HepG2 (cell line): ENCODE measurements at regions of chr3 and their contacts with region 1.

Region 1: DNA sequence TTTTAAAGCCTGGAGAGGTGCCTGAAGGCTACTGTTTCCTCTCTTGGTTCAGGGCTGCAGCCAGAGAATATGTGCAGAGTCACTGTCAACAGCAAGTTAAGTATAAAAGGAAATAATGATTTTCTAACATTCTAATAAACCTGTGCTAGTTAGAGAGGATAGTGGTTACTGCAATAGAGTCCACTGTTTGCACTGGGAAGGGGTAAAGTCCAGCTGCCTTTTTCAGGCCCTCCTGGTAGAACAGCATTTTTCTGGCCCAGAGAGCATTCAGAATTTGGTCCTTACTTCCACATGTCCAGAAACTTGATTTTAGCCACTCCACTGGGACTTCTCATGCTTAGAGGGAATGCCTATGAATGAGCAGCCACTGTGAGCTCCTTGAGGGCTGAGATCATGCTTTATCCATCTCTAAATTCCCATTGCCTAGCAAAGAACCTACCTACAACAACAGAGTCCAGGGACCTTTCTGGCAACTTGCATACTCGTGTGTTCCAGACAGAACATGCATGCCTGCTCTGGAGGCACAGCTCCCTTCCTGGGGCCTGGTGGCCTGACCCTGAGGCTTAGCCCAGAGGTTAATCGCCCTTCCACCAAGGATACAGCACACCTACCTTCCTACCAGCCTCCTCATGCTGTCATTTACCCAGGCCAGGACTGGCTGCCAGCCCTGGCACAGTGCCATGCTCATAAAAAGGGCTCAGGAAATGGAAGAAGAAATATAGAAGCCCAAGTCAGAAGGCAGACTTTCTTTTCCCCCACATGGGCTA is 50.3 kb upstream of the ATP13A3 start:
- DNase-seq: peak; percentile 70
- ATAC-seq: peak; percentile 90
- H3K4me3 ChIP-seq: peak overlapping the region in 2 of 3 experiments; percentile 42 to 57; a peak in 5 of 6 replicates
- H3K27ac ChIP-seq: peak overlapping the region; percentile 91
- H3K4me1 ChIP-seq: peaks cover 49% of the 10 kb centered on the region
- H3K27me3 ChIP-seq: no peaks in the 10 kb centered on the region
- CTCF ChIP-seq: no peak
- EP300 ChIP-seq: peak in 1 of 2 experiments; percentile 67; a peak in 2 of 4 replicates
- POLR2A ChIP-seq: 0 out of 4 replicates have a peak, but pooled peaks of 1 of the 2 experiments have one; percentile 25
- RAD21 ChIP-seq: no peak

Region 2: DNA sequence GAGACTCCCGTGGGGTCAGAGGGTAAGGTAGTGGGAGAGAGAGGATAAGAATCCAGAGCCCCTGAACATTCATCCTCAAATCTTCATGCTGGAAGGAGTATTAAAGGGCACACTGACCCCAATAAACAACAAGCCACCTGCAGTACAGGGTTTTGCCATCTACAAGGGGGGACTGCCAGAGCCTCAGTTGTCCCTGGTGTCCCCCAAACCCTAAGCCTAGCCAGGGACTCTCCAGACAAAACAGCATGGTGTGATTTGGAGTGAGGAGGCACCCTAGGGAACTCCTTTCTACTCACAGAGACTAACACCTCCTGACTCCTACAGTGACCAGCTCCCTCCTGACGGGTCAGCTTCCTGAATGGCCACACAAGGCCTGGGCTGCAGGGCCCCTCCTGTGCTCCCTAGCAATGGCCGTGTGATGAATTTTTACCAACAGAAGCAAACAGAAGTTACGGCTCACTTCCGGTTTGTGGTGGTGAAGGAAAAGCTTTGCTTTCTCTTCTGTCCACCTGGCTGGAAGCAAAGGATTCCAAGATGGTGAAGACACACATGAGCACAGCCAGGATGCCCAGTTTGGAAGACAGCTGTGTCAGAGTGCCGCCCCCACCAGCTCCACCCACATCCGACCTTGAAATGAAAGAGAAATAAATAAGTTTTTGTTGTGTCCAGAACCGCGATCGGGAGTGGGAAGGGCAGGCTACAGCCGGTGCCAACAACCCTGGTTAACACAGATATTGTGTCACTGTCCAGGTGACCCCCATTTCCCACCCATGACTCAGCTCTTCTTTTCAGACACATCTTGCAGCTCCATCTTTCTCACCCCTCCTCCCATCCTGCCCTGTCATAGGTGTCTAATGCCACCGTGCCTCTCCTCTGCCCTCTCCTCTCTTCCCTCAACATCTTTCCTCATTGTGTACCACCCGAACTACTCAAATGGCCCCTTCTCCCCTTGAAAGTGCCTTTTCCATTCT is 19.3 kb after region 1 on chr3:
- CTCF ChIA-PET with region 1: no interaction called
- POLR2A ChIA-PET with region 1: interaction called, 11 read pairs
- in situ Hi-C with region 1: no loop called
- intact Hi-C with region 1: no loop called
- DNase-seq: peak; percentile 30
- ATAC-seq: peak; percentile 74
- H3K4me3 ChIP-seq: peak overlapping the region; percentile 42 to 60 (median 55)
- H3K27ac ChIP-seq: no peak overlapping the region
- H3K4me1 ChIP-seq: peaks cover 54% of the 10 kb centered on the region
- H3K27me3 ChIP-seq: no peaks in the 10 kb centered on the region
- CTCF ChIP-seq: no peak
- EP300 ChIP-seq: no peak
- POLR2A ChIP-seq: 0 out of 4 replicates have a peak, but pooled peaks of 1 of the 2 experiments have one; percentile 35
- RAD21 ChIP-seq: no peak